Uterus (tissue), 4 donors: ENCODE measurements at regions of chr11 and their contacts with region 1.

Region 1: GRCh38 chr11:2151500-2152257 is 9.3 kb downstream of the INS start:
- DNase-seq: peak; percentile 82
- H3K4me3 ChIP-seq: no peak overlapping the region
- H3K27ac ChIP-seq: no peak overlapping the region
- H3K4me1 ChIP-seq: peaks cover 0 to 5% of the 10 kb centered on the region in 2 donors
- H3K27me3 ChIP-seq: peaks cover 0 to 4% of the 10 kb centered on the region in 2 donors
- CTCF ChIP-seq: peak; percentile 78 to 95 (median 90)
- POLR2A ChIP-seq: no peak

Region 2: GRCh38 chr11:1694064-1694845 is 457.4 kb before region 1 on chr11:
- intact Hi-C with region 1: loop called (anchors 10 kb)
- DNase-seq: peak; percentile 76 to 84
- H3K4me3 ChIP-seq: peak overlapping the region in 1 of 2 donors; percentile 5
- H3K27ac ChIP-seq: peak overlapping the region; percentile 55 to 58
- H3K4me1 ChIP-seq: peaks cover 0 to 7% of the 10 kb centered on the region in 2 donors
- H3K27me3 ChIP-seq: no peaks in the 10 kb centered on the region
- CTCF ChIP-seq: peak; percentile 93 to 96 (median 94)
- POLR2A ChIP-seq: no peak

Region 3: DNA sequence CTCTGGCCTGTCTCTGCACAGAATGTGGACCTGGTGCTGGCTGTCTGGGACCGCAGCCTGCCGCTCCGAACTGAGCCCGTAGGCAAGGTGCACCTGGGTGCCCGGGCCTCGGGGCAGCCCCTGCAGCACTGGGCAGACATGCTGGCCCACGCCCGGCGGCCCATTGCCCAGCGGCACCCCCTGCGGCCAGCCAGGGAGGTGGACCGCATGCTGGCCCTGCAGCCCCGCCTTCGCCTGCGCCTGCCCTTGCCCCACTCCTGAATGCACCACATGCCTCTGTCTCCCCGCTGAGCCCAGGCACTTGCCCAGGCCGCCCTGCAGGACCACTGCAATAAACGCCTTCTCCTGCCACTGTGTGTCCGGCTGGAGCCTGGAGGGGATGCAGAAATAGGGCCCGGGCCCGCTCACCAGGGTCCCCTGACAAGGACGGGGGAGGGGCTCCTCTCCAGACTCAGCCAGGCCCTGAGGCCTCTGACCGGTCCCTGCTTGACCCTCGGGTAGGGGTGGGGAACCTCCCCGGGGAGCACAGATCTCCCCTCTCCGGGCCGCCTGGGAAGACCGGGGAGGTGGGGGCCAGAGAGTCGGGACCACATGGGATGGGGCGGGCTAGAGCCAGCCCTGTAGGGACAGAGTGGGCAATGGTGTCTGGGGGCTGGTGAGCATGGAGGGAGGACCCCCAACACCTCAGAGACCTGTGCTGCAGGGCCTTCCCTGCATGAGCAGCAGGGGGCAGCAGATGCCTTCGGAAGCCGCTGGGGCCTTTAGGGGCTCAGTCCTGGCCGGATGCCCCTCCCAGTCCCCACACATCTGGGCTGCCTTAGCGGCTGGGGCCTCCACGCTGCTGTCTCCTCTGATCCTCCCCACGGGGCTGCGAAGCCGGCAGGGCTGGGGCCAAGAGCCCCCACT is 314.3 kb before region 1 on chr11:
- intact Hi-C with region 1: loop called (anchors 5 kb)
- DNase-seq: peak; percentile 66 to 78
- H3K4me3 ChIP-seq: no peak overlapping the region
- H3K27ac ChIP-seq: no peak overlapping the region
- H3K4me1 ChIP-seq: no peaks in the 10 kb centered on the region
- H3K27me3 ChIP-seq: no peaks in the 10 kb centered on the region
- CTCF ChIP-seq: peak; percentile 87 to 95 (median 92)
- POLR2A ChIP-seq: no peak

Region 4: GRCh38 chr11:1882519-1883238 is 269.0 kb before region 1 on chr11:
- intact Hi-C with region 1: loop called (anchors 5 kb)
- DNase-seq: peak; percentile 79 to 88
- H3K4me3 ChIP-seq: no peak overlapping the region
- H3K27ac ChIP-seq: peak overlapping the region; percentile 86 to 89
- H3K4me1 ChIP-seq: peaks cover 0 to 20% of the 10 kb centered on the region in 2 donors
- H3K27me3 ChIP-seq: no peaks in the 10 kb centered on the region
- CTCF ChIP-seq: peak; percentile 89 to 95 (median 92)
- POLR2A ChIP-seq: peak in 1 of 2 donors; percentile 14

Region 5: GRCh38 chr11:2137202-2138071 is 14.2 kb before region 1 on chr11:
- intact Hi-C with region 1: no loop called
- DNase-seq: peak; percentile 71 to 72
- H3K4me3 ChIP-seq: peak overlapping the region; percentile 24 to 35
- H3K27ac ChIP-seq: peak overlapping the region in 1 of 2 donors; percentile 56
- H3K4me1 ChIP-seq: peaks cover 0 to 14% of the 10 kb centered on the region in 2 donors
- H3K27me3 ChIP-seq: peaks cover 8 to 21% of the 10 kb centered on the region in 2 donors
- CTCF ChIP-seq: no peak
- POLR2A ChIP-seq: no peak